Common myeloid progenitor, CD34-positive (primary cell): ENCODE measurements at regions of chr5 and their contacts with region 1.

Region 1: GRCh38 chr5:141564216-141564692 is 54.5 kb downstream of the DIAPH1 start:
- DNase-seq: peak; percentile 95 to 97 (median 97)
- H3K4me3 ChIP-seq: peak overlapping the region in 1 of 7 experiments; percentile 4
- H3K27ac ChIP-seq: no peak overlapping the region
- H3K4me1 ChIP-seq: peaks cover 0 to 10% (median 3%) of the 10 kb centered on the region in 4 experiments
- H3K27me3 ChIP-seq: no peaks in the 10 kb centered on the region

Region 2: DNA sequence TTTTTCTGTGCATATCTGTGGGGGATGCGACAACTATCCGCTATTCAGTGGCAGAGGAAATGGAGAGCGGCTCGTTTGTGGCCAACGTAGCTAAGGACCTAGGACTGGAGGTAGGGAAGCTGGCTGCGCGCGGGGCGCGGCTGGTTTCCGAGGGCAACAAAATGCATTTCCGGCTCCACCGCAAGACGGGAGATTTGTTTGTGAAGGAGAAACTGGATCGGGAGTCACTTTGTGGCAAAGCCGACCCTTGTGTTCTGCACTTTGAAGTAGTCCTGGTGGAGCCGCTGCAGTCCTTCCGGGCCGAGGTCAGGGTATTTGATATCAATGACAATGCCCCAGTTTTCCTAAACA is 512.8 kb before region 1 on chr5:
- CTCF ChIA-PET with region 1: no interaction called
- POLR2A ChIA-PET with region 1: no interaction called
- DNase-seq: no peak
- H3K4me3 ChIP-seq: no peak overlapping the region
- H3K27ac ChIP-seq: no peak overlapping the region
- H3K4me1 ChIP-seq: no peaks in the 10 kb centered on the region
- H3K27me3 ChIP-seq: peaks cover 12 to 21% (median 17%) of the 10 kb centered on the region in 5 experiments

Region 3: GRCh38 chr5:141412854-141413539 is 151.3 kb before region 1 on chr5 and contains the start of gene PCDHGA10:
- CTCF ChIA-PET with region 1: interaction called, 65 read pairs
- POLR2A ChIA-PET with region 1: no interaction called
- DNase-seq: peak; percentile 64 to 87 (median 87)
- H3K4me3 ChIP-seq: peak within 1 kb of the TSS; percentile 27 to 84 (median 68)
- H3K27ac ChIP-seq: no peak within 1 kb of the TSS
- H3K4me1 ChIP-seq: peaks cover 0 to 15% (median 10%) of the 10 kb centered on the region in 4 experiments
- H3K27me3 ChIP-seq: peaks cover 24 to 85% (median 38%) of the 10 kb centered on the region in 5 experiments

Region 4: GRCh38 chr5:141430332-141431113 is 133.7 kb before region 1 on chr5 and contains the start of gene PCDHGA12:
- CTCF ChIA-PET with region 1: interaction called, 11 read pairs
- POLR2A ChIA-PET with region 1: no interaction called
- DNase-seq: peak; percentile 82 to 88 (median 86)
- H3K4me3 ChIP-seq: peak within 1 kb of the TSS in 6 of 7 experiments; percentile 21 to 56 (median 48)
- H3K27ac ChIP-seq: no peak within 1 kb of the TSS
- H3K4me1 ChIP-seq: peaks cover 2 to 6% (median 5%) of the 10 kb centered on the region in 4 experiments
- H3K27me3 ChIP-seq: peaks cover 8 to 58% (median 25%) of the 10 kb centered on the region in 5 experiments

Region 5: GRCh38 chr5:141547488-141547887 is 16.8 kb before region 1 on chr5:
- CTCF ChIA-PET with region 1: interaction called, 14 read pairs
- POLR2A ChIA-PET with region 1: no interaction called
- DNase-seq: peak; percentile 46 to 86 (median 76)
- H3K4me3 ChIP-seq: no peak overlapping the region
- H3K27ac ChIP-seq: no peak overlapping the region
- H3K4me1 ChIP-seq: peaks cover 0 to 4% (median 1%) of the 10 kb centered on the region in 4 experiments
- H3K27me3 ChIP-seq: no peaks in the 10 kb centered on the region

Region 6: GRCh38 chr5:141657937-141658545 is 93.8 kb after region 1 on chr5:
- CTCF ChIA-PET with region 1: no interaction called
- POLR2A ChIA-PET with region 1: no interaction called
- DNase-seq: peak in 2 of 3 donors; percentile 11 to 26
- H3K4me3 ChIP-seq: no peak overlapping the region
- H3K27ac ChIP-seq: no peak overlapping the region
- H3K4me1 ChIP-seq: no peaks in the 10 kb centered on the region
- H3K27me3 ChIP-seq: peaks cover 0 to 4% (median 0%) of the 10 kb centered on the region in 5 experiments

Region 7: DNA sequence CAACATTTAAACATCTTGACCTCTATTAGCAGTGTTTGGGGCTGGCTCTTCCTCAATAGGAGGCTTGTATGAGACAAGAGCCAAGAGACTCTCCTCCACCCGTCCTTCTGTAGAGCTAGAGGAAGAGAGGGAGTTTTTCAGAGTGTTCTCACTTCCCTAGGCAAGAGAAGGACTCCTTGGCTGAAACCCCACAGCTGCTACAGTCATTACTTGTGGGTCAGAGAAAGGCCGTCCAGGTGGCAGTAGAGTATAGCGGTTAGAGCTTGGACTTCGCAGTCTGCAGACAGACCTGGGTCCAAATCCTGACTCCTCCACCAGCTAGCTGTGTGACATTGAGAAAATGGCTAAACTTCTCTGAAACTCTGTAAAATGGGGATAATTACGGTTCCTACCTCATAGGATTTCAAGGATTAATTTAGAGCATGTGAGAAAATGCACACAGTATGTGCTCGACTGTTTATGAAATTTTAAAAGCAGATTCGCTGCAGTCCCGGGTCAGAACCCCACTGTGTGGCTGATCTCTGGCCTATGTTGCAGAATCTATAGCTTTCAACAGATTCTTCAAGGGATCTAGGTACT is 198.6 kb after region 1 on chr5:
- CTCF ChIA-PET with region 1: no interaction called
- POLR2A ChIA-PET with region 1: no interaction called
- DNase-seq: no peak
- H3K4me3 ChIP-seq: no peak overlapping the region
- H3K27ac ChIP-seq: no peak overlapping the region
- H3K4me1 ChIP-seq: no peaks in the 10 kb centered on the region
- H3K27me3 ChIP-seq: peaks cover 4 to 62% (median 30%) of the 10 kb centered on the region in 5 experiments